ENCODE measurements at regions of chr14 and their contacts with region 1.

Region 1: DNA sequence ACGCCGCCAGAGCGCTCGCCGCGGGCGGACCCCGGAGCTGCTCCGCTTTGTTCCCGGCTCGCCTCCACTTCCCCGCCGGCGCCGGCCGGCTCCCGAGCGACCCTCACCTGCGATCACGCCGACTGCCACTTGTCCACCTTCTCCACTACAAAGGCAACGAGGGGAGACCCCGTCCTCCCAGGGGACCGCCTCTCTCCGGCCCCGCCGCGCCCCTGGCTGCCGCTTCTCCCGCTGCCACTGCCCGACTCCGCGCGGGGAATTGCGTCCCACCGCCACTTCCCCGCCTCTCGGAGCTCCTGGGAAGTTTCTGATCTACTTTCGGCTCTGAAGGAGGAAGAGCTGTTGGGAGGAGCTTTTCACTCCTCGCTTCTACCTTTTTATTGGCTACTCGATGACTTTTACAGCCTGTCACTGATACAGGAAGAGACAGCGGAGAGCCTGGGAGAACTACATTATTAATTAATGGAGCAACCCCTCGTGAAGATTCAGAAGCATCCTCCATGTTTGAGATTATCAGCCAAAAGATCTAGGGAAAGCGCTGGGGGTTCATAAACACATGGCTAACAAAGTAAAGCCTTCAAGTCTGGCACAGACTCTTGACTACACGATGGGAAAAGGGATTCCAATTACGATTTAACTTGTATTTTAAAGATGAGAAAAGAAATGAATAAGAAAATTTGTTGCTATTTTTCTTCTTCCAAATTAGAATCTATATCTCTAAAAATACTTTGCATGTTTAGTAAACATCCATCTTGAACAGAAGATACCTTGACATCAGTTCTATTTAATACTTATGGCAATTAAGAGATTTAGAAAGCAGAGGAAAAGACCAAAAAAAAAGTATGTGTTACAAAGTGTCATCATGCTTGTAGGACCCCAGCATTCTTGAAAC is at the start of gene BAZ1A:
- DNase-seq: peak in 8 of 9 experiments; percentile 4 to 79 (median 34)
- ATAC-seq: peak; percentile 11
- H3K4me3 ChIP-seq: peak within 1 kb of the TSS; percentile 59 to 95
- H3K4me3 Mint-ChIP-seq: peak within 1 kb of the TSS; percentile 100
- H3K27ac ChIP-seq: peak within 1 kb of the TSS; percentile 96 to 100
- H3K27ac Mint-ChIP-seq: peak within 1 kb of the TSS; percentile 99
- H3K4me1 ChIP-seq: peaks cover 14% of the 10 kb centered on the region
- H3K4me1 Mint-ChIP-seq: peaks cover 32% of the 10 kb centered on the region
- H3K27me3 ChIP-seq: no peaks in the 10 kb centered on the region
- H3K27me3 Mint-ChIP-seq: no peaks in the 10 kb centered on the region
- CTCF ChIP-seq: no peak
- total RNA-seq, gene BAZ1A: 48.8 to 52.7 TPM

Region 2: GRCh38 chr14:34539407-34540180 is 335.7 kb before region 1 on chr14 and contains the start of gene EAPP:
- CTCF ChIA-PET with region 1: no interaction called
- POLR2A ChIA-PET with region 1: no interaction called
- intact Hi-C with region 1: loop called in 1 of 2 experiments (anchors 10 kb)
- DNase-seq: peak; percentile 88 to 97 (median 95)
- ATAC-seq: peak; percentile 98
- H3K4me3 ChIP-seq: peak within 1 kb of the TSS; percentile 94 to 95
- H3K4me3 Mint-ChIP-seq: peak within 1 kb of the TSS; percentile 97
- H3K27ac ChIP-seq: peak within 1 kb of the TSS; percentile 96 to 97
- H3K27ac Mint-ChIP-seq: peak within 1 kb of the TSS; percentile 98
- H3K4me1 ChIP-seq: peaks cover 16% of the 10 kb centered on the region
- H3K4me1 Mint-ChIP-seq: peaks cover 34% of the 10 kb centered on the region
- H3K27me3 ChIP-seq: no peaks in the 10 kb centered on the region
- H3K27me3 Mint-ChIP-seq: no peaks in the 10 kb centered on the region
- CTCF ChIP-seq: no peak
- total RNA-seq, gene EAPP: 91.0 to 91.4 TPM

Region 3: GRCh38 chr14:34682787-34683321 is 192.4 kb before region 1 on chr14:
- CTCF ChIA-PET with region 1: no interaction called
- POLR2A ChIA-PET with region 1: no interaction called
- intact Hi-C with region 1: loop called in 1 of 2 experiments (anchors 10 kb)
- DNase-seq: peak in 1 of 9 experiments; percentile 9
- ATAC-seq: peak; percentile 48
- H3K4me3 ChIP-seq: no peak overlapping the region
- H3K4me3 Mint-ChIP-seq: no peak overlapping the region
- H3K27ac ChIP-seq: no peak overlapping the region
- H3K27ac Mint-ChIP-seq: no peak overlapping the region
- H3K4me1 ChIP-seq: no peaks in the 10 kb centered on the region
- H3K4me1 Mint-ChIP-seq: peaks cover 5% of the 10 kb centered on the region
- H3K27me3 ChIP-seq: no peaks in the 10 kb centered on the region
- H3K27me3 Mint-ChIP-seq: peaks cover 4% of the 10 kb centered on the region
- CTCF ChIP-seq: no peak

Region 4: DNA sequence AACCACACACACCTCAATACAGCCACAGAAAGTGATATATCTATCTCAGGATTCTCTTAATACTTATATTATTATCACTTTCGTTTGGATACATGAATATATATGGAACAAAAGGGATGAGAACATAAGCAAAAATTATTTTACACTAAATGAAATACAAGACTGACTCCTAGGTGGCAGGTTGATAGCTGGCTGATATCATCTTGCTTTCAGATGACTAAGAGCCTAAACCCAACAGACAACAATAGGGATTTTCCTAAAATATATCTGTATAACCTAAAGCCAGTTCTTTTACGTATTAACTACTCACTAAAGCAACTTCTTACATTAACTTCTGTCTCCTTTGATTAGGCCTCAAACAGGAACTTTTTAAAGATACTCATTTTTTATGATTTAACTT is 65.2 kb before region 1 on chr14:
- CTCF ChIA-PET with region 1: no interaction called
- POLR2A ChIA-PET with region 1: interaction called, 3 read pairs
- intact Hi-C with region 1: loop called in 1 of 2 experiments (anchors 5 kb)
- DNase-seq: no peak
- ATAC-seq: no peak
- H3K4me3 ChIP-seq: no peak overlapping the region
- H3K4me3 Mint-ChIP-seq: no peak overlapping the region
- H3K27ac ChIP-seq: no peak overlapping the region
- H3K27ac Mint-ChIP-seq: no peak overlapping the region
- H3K4me1 ChIP-seq: no peaks in the 10 kb centered on the region
- H3K4me1 Mint-ChIP-seq: peaks cover 17% of the 10 kb centered on the region
- H3K27me3 ChIP-seq: no peaks in the 10 kb centered on the region
- H3K27me3 Mint-ChIP-seq: no peaks in the 10 kb centered on the region
- CTCF ChIP-seq: no peak

Region 5: DNA sequence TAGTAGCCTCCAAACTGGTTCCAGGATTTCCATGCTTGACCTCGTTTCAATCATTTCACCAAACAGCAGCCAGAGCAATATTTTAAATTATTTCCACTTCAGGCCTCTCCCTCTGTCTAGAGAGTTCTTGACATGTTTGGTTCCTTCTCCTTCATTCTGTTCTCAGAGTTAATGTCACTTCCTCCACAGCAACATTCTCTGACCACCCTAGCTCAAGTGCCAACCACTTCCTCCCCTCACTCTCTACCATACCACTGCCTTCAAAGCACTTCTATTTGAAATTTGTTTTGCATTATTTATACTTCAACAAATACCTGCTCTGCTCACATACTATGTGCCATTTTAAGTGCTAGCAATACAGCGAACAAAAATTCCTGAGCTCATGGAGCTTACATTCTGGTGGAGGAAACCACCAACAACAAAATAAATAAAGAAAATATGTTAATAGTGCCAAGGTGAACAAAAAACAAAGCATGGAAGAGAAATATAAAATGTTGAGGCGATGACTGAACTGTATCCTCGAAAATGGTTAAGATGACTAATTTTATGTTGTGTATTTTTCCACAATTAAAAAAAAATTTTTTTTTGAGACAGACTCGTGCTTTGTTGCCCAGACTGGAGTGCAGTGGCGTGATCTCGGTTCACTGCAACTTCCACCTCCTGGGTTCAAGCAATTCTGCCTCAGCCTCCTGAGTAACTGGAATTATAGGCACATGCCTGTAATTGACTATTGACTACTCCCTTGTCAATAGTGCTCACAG is 17.4 kb before region 1 on chr14:
- CTCF ChIA-PET with region 1: interaction called, 3 read pairs
- POLR2A ChIA-PET with region 1: interaction called, 16 read pairs
- intact Hi-C with region 1: loop called (anchors 2 kb)
- DNase-seq: peak in 6 of 9 experiments; percentile 10 to 73 (median 50)
- ATAC-seq: peak; percentile 78
- H3K4me3 ChIP-seq: no peak overlapping the region
- H3K4me3 Mint-ChIP-seq: peak overlapping the region; percentile 41
- H3K27ac ChIP-seq: peak overlapping the region in 1 of 2 experiments; percentile 65
- H3K27ac Mint-ChIP-seq: peak overlapping the region; percentile 67
- H3K4me1 ChIP-seq: peaks cover 24% of the 10 kb centered on the region
- H3K4me1 Mint-ChIP-seq: peaks cover 55% of the 10 kb centered on the region
- H3K27me3 ChIP-seq: no peaks in the 10 kb centered on the region
- H3K27me3 Mint-ChIP-seq: no peaks in the 10 kb centered on the region
- CTCF ChIP-seq: no peak

Region 6: GRCh38 chr14:35046048-35046741 is 170.9 kb after region 1 on chr14 and contains the start of gene FAM177A1:
- CTCF ChIA-PET with region 1: no interaction called
- POLR2A ChIA-PET with region 1: interaction called, 11 read pairs
- intact Hi-C with region 1: loop called (anchors 1 to 2 kb)
- DNase-seq: peak; percentile 97 to 100 (median 99)
- ATAC-seq: peak; percentile 83
- H3K4me3 ChIP-seq: peak within 1 kb of the TSS; percentile 81 to 96
- H3K4me3 Mint-ChIP-seq: peak within 1 kb of the TSS; percentile 82
- H3K27ac ChIP-seq: peak within 1 kb of the TSS; percentile 96 to 100
- H3K27ac Mint-ChIP-seq: peak within 1 kb of the TSS; percentile 98
- H3K4me1 ChIP-seq: peaks cover 20% of the 10 kb centered on the region
- H3K4me1 Mint-ChIP-seq: peaks cover 28% of the 10 kb centered on the region
- H3K27me3 ChIP-seq: no peaks in the 10 kb centered on the region
- H3K27me3 Mint-ChIP-seq: no peaks in the 10 kb centered on the region
- CTCF ChIP-seq: no peak
- total RNA-seq, gene FAM177A1: 227 to 230 TPM

Region 7: DNA sequence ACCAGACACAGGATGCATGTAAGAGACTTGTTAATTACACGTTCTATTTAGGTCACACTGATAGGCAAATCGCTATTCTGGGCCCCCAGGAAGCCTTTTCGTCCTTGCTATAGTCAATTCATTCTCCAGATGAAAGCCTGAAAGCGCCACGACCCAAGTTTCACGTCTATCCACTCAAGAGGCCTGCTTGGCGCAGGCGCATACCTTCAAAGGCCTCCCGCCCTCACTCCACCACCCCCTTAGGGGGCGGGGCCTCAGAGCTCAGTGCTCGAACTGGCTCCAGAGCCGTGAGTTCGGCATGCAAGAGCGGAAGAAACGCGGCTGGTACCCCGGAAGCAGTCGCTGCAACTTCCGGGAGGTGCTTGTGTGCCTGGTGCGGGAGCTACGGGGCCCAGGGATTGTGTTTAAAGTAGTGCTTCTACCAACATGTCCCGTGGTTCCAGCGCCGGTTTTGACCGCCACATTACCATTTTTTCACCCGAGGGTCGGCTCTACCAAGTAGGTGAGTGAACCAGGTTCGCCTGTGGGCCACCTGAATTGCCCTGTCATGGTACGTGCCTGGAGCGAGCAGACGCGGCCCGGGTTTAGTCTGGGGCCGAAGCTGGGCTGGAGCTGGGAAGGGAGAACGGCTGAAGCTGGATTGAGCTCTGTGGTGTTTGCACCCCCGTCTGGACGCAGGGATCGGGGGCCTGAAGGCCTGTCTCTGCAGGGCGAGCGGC is 416.9 kb after region 1 on chr14 and contains the start of gene PSMA6:
- CTCF ChIA-PET with region 1: no interaction called
- POLR2A ChIA-PET with region 1: interaction called, 4 read pairs
- intact Hi-C with region 1: loop called (anchors 2 to 5 kb)
- DNase-seq: peak; percentile 98 to 100 (median 99)
- ATAC-seq: peak; percentile 97
- H3K4me3 ChIP-seq: peak within 1 kb of the TSS; percentile 79 to 85
- H3K4me3 Mint-ChIP-seq: peak within 1 kb of the TSS; percentile 98
- H3K27ac ChIP-seq: peak within 1 kb of the TSS; percentile 82 to 91
- H3K27ac Mint-ChIP-seq: peak within 1 kb of the TSS; percentile 98
- H3K4me1 ChIP-seq: peaks cover 31% of the 10 kb centered on the region
- H3K4me1 Mint-ChIP-seq: peaks cover 48% of the 10 kb centered on the region
- H3K27me3 ChIP-seq: no peaks in the 10 kb centered on the region
- H3K27me3 Mint-ChIP-seq: no peaks in the 10 kb centered on the region
- CTCF ChIP-seq: no peak
- total RNA-seq, gene PSMA6: 72.3 to 78.9 TPM

Measured in CD8-positive, alpha-beta T cell (primary cell).